ENCODE measurements at regions of chr1 and their contacts with region 1.

Region 1: DNA sequence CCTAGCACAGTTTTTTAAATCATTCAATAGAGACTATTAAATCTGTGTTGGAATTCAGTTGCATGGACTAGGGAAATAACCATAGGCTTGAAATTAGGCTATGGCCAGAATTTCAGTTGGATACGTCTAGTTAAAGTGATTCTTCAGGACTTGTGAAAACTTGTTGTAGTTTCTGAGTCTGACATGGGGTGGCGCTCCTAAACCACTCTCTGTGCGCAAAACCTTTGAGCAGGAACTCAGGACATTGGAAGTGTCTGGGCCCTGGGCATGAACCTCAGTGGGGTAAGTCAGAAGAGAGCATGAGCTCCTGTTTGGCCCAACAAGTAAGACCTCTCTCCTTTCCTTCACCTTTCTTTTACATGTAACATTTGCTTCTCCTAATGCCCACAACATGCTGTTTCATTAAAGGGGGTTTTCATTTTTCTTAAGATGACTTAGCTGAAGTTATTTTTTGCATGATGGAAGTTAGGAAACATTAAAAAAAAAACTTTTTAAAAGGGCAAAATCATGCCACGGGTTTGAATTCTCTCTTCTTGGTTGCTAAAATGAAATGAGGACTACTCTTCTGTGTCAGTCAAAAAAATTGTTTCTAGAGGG is 17.1 kb upstream of the CCDC190 start:
- DNase-seq: peak; percentile 33
- H3K4me3 ChIP-seq: no peak overlapping the region; a peak in 1 of 4 replicates
- H3K27ac ChIP-seq: peak overlapping the region; percentile 60 to 87
- H3K4me1 ChIP-seq: peaks cover 19 to 24% of the 10 kb centered on the region in 2 experiments
- H3K27me3 ChIP-seq: no peaks in the 10 kb centered on the region
- CTCF ChIP-seq: peak; percentile 91
- EP300 ChIP-seq: no peak
- RAD21 ChIP-seq: peak; percentile 100

Region 2: GRCh38 chr1:162633081-162633762 is 244.9 kb before region 1 on chr1:
- CTCF ChIA-PET with region 1: no interaction called
- POLR2A ChIA-PET with region 1: no interaction called
- DNase-seq: no peak
- H3K4me3 ChIP-seq: peak overlapping the region; percentile 62 to 78
- H3K27ac ChIP-seq: peak overlapping the region; percentile 99 to 100
- H3K4me1 ChIP-seq: peaks cover 45 to 50% of the 10 kb centered on the region in 2 experiments
- H3K27me3 ChIP-seq: no peaks in the 10 kb centered on the region
- CTCF ChIP-seq: peak; percentile 46
- EP300 ChIP-seq: peak in 1 of 2 experiments; percentile 6; a peak in 1 of 4 replicates
- RAD21 ChIP-seq: peak; percentile 31; the same call in 1 of the 2 replicates

Region 3: GRCh38 chr1:162847839-162848453 is 30.2 kb before region 1 on chr1:
- CTCF ChIA-PET with region 1: interaction called, 15 read pairs
- POLR2A ChIA-PET with region 1: interaction called, 4 read pairs
- DNase-seq: peak; percentile 61
- H3K4me3 ChIP-seq: peak overlapping the region in 1 of 2 experiments; percentile 21; a peak in 1 of 4 replicates
- H3K27ac ChIP-seq: no peak overlapping the region; a peak in 2 of 4 replicates
- H3K4me1 ChIP-seq: peaks cover 14 to 31% of the 10 kb centered on the region in 2 experiments
- H3K27me3 ChIP-seq: no peaks in the 10 kb centered on the region
- CTCF ChIP-seq: peak; percentile 98
- EP300 ChIP-seq: no peak; a peak in 1 of 4 replicates
- RAD21 ChIP-seq: peak; percentile 90

Region 4: DNA sequence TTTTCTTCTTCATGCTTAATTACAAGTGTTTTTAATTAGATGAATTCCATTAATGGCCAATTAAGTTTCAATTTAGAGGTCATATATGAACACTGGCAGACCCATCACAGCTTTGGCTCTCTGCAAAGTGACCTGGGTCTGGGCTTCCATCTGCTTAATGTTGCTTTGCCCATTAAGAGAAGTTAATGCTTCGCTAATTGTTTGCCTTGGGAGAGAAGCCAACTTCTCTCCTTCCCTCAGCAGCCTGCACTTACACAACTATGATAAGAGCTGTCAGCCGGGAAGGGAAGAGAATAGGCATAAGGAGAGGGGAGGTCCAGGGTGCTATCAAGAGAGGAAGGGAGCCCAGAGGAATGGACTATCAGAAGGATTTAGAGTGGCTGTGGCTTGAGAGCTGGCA is 11.9 kb after region 1 on chr1:
- CTCF ChIA-PET with region 1: interaction called, 10 read pairs
- POLR2A ChIA-PET with region 1: interaction called, 27 read pairs
- DNase-seq: peak; percentile 68
- H3K4me3 ChIP-seq: no peak overlapping the region
- H3K27ac ChIP-seq: peak overlapping the region in 1 of 2 experiments; percentile 100; a peak in 2 of 4 replicates
- H3K4me1 ChIP-seq: peaks cover 0 to 68% of the 10 kb centered on the region in 2 experiments; a peak in 3 of 4 replicates
- H3K27me3 ChIP-seq: no peaks in the 10 kb centered on the region
- CTCF ChIP-seq: no peak
- EP300 ChIP-seq: peak; percentile 51 to 100; a peak in 3 of 4 replicates
- RAD21 ChIP-seq: peak; percentile 52

Region 5: DNA sequence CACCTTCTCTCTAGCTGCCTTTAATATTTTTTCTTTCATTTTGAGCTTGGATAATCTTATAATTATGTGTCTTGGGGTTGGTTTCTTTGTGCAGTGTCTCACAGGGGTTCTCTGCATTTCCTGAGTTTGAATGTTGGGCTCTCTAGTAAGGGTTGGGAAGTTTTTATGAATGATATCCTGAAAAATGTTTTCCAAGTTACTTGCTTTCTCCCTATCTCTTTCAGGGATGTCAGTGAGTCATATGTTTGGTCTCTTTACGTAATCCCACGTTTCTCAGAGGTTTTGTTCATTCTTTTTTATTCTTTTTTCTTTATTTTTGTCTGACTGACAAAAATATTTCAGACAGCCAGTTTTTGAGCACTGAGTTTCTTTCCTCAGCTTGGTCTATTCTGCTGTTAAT is 38.3 kb after region 1 on chr1:
- CTCF ChIA-PET with region 1: interaction called, 14 read pairs
- POLR2A ChIA-PET with region 1: interaction called, 393 read pairs
- DNase-seq: no peak
- H3K4me3 ChIP-seq: no peak overlapping the region
- H3K27ac ChIP-seq: peak overlapping the region; percentile 53 to 99
- H3K4me1 ChIP-seq: peaks cover 0 to 34% of the 10 kb centered on the region in 2 experiments; a peak in 2 of 4 replicates
- H3K27me3 ChIP-seq: no peaks in the 10 kb centered on the region
- CTCF ChIP-seq: no peak
- EP300 ChIP-seq: no peak
- RAD21 ChIP-seq: no peak

Region 6: GRCh38 chr1:162942916-162943567 is 64.9 kb after region 1 on chr1:
- CTCF ChIA-PET with region 1: interaction called, 3 read pairs
- POLR2A ChIA-PET with region 1: interaction called, 11 read pairs
- DNase-seq: no peak
- H3K4me3 ChIP-seq: no peak overlapping the region
- H3K27ac ChIP-seq: peak overlapping the region in 1 of 2 experiments; percentile 75; a peak in 2 of 4 replicates
- H3K4me1 ChIP-seq: peaks cover 9 to 36% of the 10 kb centered on the region in 2 experiments; a peak in 3 of 4 replicates
- H3K27me3 ChIP-seq: no peaks in the 10 kb centered on the region
- CTCF ChIP-seq: no peak
- EP300 ChIP-seq: no peak
- RAD21 ChIP-seq: no peak

Region 7: DNA sequence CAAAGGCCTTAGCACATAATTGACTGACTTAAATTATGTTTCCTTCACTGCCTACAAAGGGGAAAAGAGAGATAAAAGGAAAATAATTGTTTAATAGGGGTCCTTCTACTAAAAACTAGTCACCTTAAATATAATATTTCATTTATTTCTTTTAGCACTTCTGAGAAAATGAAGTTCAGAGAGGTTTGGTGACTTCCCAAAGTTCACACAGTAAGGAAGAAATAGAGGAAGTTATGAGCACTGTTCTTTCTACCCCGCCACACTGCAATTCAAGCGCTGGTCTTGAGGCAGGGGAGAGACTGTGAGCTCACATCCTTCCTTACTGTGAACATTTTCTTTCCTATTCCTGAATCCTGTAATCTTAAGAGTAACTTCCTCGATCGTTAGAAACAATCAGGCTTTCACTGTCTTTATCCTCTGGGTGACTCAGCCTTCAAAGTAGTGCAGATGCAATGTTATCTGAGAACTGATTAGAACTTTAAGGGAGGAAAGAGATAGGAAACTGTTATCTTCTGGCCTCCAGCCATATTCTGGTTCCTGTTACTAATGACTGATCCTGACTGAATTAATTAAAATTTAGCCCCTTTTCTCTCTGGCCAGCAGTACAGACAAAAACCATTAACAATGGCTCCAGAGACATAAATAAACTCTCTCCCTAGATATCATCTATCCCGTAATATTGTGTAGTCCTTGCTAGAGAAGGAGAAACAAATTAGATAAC is 317.8 kb after region 1 on chr1:
- CTCF ChIA-PET with region 1: interaction called, 4 read pairs
- POLR2A ChIA-PET with region 1: interaction called, 46 read pairs
- DNase-seq: no peak
- H3K4me3 ChIP-seq: peak overlapping the region; percentile 47 to 62
- H3K27ac ChIP-seq: peak overlapping the region; percentile 79 to 99
- H3K4me1 ChIP-seq: peaks cover 5 to 56% of the 10 kb centered on the region in 2 experiments; a peak in 2 of 4 replicates
- H3K27me3 ChIP-seq: no peaks in the 10 kb centered on the region
- CTCF ChIP-seq: no peak
- EP300 ChIP-seq: peak; percentile 82 to 100
- RAD21 ChIP-seq: 0 out of 2 replicates have a peak, but pooled peaks have one; percentile 3

Measured in SK-N-SH (cell line).